CD4-positive, alpha-beta memory T cell (primary cell): ENCODE measurements at regions of chr2 and their contacts with region 1.

Region 1: GRCh38 chr2:130332271-130333073 is 10.2 kb upstream of the IMP4 start:
- DNase-seq: peak; percentile 54 to 64 (median 60)
- H3K4me3 ChIP-seq: no peak overlapping the region
- H3K4me3 Mint-ChIP-seq: peak overlapping the region in 7 of 8 donors; percentile 16 to 63 (median 54)
- H3K27ac ChIP-seq: no peak overlapping the region
- H3K27ac Mint-ChIP-seq: peak overlapping the region in 2 of 7 donors; percentile 24 to 58
- H3K4me1 ChIP-seq: peaks cover 4% of the 10 kb centered on the region
- H3K4me1 Mint-ChIP-seq: peaks cover 3 to 17% (median 7%) of the 10 kb centered on the region in 4 donors
- H3K27me3 ChIP-seq: no peaks in the 10 kb centered on the region
- H3K27me3 Mint-ChIP-seq: peaks cover 14 to 21% of the 10 kb centered on the region in 2 donors

Region 2: GRCh38 chr2:129936334-129936934 is 396.0 kb before region 1 on chr2:
- CTCF ChIA-PET with region 1: interaction called, 79 read pairs
- POLR2A ChIA-PET with region 1: no interaction called
- intact Hi-C with region 1: no loop called
- DNase-seq: peak in 3 of 5 donors; percentile 22 to 36 (median 23)
- H3K4me3 ChIP-seq: no peak overlapping the region
- H3K4me3 Mint-ChIP-seq: no peak overlapping the region
- H3K27ac ChIP-seq: no peak overlapping the region
- H3K27ac Mint-ChIP-seq: no peak overlapping the region
- H3K4me1 ChIP-seq: no peaks in the 10 kb centered on the region
- H3K4me1 Mint-ChIP-seq: peaks cover 0 to 2% (median 0%) of the 10 kb centered on the region in 4 donors
- H3K27me3 ChIP-seq: no peaks in the 10 kb centered on the region
- H3K27me3 Mint-ChIP-seq: peaks cover 14 to 19% of the 10 kb centered on the region in 2 donors

Region 3: DNA sequence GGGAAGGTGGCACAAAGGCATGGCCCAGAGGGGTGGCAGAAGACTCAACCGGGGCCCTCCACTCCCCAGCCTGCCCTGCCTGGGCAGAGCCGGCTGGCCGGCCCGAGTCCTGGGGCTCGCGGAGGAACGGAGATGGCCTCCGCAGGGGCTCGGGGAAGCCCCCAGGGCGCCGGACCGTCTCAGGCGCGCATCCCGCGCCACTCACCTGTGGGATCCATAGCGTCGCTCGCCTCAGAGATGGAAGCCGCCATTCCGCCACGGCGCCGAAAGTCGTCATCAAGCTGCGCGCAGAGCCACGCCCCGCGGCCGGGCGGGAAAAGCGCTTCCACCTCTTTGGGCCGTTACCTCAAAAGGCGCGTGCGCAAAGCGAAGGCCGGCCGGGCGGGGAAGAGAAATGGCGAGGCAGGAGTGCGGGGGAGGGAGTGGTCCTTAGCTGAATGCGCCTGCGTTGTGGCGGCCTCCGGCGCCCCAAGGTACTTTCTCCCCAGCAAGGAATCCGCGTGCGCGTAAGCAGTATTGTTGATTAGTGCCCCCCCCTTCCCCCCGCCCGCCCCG is 151.1 kb before region 1 on chr2 and contains the start of gene SMPD4:
- CTCF ChIA-PET with region 1: interaction called, 7 read pairs
- POLR2A ChIA-PET with region 1: interaction called, 3 read pairs
- intact Hi-C with region 1: loop called (anchors 1 kb)
- DNase-seq: peak; percentile 97 to 98 (median 98)
- H3K4me3 ChIP-seq: peak within 1 kb of the TSS; percentile 81 to 97
- H3K4me3 Mint-ChIP-seq: peak within 1 kb of the TSS; percentile 90 to 97 (median 91)
- H3K27ac ChIP-seq: peak within 1 kb of the TSS; percentile 90
- H3K27ac Mint-ChIP-seq: peak within 1 kb of the TSS; percentile 94 to 98 (median 96)
- H3K4me1 ChIP-seq: peaks cover 28% of the 10 kb centered on the region
- H3K4me1 Mint-ChIP-seq: peaks cover 11 to 47% (median 23%) of the 10 kb centered on the region in 4 donors
- H3K27me3 ChIP-seq: no peaks in the 10 kb centered on the region
- H3K27me3 Mint-ChIP-seq: no peaks in the 10 kb centered on the region
- total RNA-seq, gene SMPD4: 48.8 to 51.5 TPM

Region 4: DNA sequence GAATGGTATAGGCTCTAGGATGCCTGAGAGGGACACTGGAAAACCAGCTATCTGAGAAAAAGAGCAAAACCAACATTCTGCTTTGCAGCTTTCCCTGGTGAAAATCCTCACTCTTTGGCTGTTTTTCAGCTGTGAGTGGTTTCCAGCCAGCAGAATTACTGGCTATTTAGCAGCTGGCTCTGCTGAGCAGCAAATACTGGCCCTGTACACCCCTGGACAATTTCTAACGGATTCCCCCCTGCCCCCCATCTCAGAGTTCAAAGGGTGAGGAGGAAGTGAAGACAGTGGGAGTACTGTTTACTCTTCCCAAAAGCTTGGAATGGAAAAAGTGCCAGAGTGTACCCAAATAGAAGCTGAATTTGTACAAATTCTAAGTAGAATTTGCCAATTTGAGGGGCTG is 15.9 kb before region 1 on chr2:
- CTCF ChIA-PET with region 1: interaction called, 28 read pairs
- POLR2A ChIA-PET with region 1: no interaction called
- intact Hi-C with region 1: no loop called
- DNase-seq: no peak
- H3K4me3 ChIP-seq: no peak overlapping the region
- H3K4me3 Mint-ChIP-seq: no peak overlapping the region
- H3K27ac ChIP-seq: no peak overlapping the region
- H3K27ac Mint-ChIP-seq: no peak overlapping the region
- H3K4me1 ChIP-seq: no peaks in the 10 kb centered on the region
- H3K4me1 Mint-ChIP-seq: no peaks in the 10 kb centered on the region
- H3K27me3 ChIP-seq: no peaks in the 10 kb centered on the region
- H3K27me3 Mint-ChIP-seq: peaks cover 5 to 7% of the 10 kb centered on the region in 2 donors

Region 5: DNA sequence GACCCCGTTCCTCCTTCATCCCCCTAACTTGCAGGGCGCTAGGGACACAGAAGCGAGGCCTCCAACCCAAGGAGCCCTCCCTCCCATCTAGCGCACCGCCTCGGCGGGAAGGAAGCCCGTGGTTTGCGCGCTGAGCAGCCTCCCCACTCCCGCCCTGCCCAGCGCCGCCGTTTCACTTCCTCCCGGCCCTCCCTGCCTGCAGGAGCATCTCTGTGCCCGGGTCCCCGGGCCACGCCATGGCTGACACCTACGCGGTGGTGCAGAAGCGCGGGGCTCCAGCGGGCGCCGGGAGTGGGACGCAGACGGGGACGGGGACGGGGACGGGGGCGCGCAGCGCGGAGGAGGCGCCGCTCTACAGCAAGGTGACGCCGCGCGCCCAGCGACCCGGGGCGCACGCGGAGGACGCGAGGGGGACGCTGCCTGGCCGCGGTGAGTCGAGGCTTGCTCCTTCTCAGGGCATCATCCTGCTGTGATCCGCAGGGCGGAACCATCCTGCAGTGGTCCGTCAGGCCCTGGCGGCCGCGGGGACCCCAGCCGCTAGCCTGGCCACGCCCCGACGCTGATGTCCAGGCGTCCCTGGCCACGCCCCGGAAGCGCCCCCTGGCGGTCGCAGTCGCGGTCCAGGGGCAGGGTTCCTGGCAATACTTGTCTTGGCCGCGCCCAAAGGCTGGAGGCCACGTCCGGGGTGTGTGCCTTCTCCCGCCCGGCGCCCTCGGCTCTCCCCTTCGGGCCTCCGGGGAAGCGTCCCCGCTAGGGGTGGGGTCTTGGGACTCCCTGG is 39.8 kb after region 1 on chr2:
- CTCF ChIA-PET with region 1: interaction called, 12 read pairs
- POLR2A ChIA-PET with region 1: no interaction called
- intact Hi-C with region 1: no loop called
- DNase-seq: peak; percentile 65 to 76 (median 74)
- H3K4me3 ChIP-seq: peak overlapping the region; percentile 77 to 88
- H3K4me3 Mint-ChIP-seq: peak overlapping the region; percentile 92 to 98 (median 95)
- H3K27ac ChIP-seq: peak overlapping the region; percentile 57
- H3K27ac Mint-ChIP-seq: peak overlapping the region; percentile 90 to 98 (median 97)
- H3K4me1 ChIP-seq: peaks cover 64% of the 10 kb centered on the region
- H3K4me1 Mint-ChIP-seq: peaks cover 51 to 73% (median 64%) of the 10 kb centered on the region in 4 donors
- H3K27me3 ChIP-seq: no peaks in the 10 kb centered on the region
- H3K27me3 Mint-ChIP-seq: no peaks in the 10 kb centered on the region